Tibial artery (tissue), 4 donors: ENCODE measurements at regions of chr3 and their contacts with region 1.

Region 1: DNA sequence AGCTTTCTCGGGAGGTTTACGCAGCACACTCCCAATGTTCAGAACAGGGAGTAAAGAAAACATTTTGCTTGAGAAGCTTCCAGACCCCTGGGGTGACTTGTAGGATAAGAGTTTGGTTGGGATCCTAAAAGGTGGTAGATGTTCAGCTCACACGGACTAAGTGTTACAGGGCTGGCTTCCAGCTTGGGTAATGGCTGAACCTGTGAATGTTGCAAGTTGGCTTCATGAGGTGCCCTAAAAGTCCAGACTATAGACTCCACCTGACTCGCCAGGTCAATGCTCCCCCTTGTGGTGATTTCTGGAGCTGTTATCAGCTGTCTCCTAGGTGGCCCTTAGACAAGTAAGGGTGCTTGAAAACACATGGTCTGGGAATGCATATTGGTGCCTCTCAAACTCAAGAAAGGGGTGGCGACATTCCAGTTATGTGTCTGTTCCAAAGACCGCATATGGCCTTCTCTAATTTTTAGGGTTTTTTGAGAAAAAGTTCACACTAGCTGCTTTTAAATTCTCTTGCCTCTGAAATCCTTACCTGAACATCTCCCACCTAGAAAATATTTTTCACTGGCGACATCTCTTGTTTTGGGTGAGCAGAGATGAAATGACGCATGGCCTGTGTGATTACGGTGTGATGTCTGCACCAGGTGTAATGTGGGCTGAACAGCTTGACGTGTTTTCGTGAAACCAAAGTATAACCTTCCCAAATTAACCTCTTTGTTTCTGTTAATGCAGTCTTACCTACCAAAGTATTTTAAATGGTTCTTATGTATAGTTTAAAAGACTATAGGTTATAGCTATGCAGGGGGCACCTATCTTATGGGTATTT is 175.7 kb upstream of the KBTBD8 start:
- DNase-seq: peak in 1 of 2 donors; percentile 40
- H3K4me3 ChIP-seq: no peak overlapping the region
- H3K27ac ChIP-seq: no peak overlapping the region
- H3K4me1 ChIP-seq: peaks cover 0 to 8% (median 0%) of the 10 kb centered on the region in 4 donors
- H3K27me3 ChIP-seq: peaks cover 0 to 6% of the 10 kb centered on the region in 2 donors
- CTCF ChIP-seq: peak; percentile 63 to 66

Region 2: DNA sequence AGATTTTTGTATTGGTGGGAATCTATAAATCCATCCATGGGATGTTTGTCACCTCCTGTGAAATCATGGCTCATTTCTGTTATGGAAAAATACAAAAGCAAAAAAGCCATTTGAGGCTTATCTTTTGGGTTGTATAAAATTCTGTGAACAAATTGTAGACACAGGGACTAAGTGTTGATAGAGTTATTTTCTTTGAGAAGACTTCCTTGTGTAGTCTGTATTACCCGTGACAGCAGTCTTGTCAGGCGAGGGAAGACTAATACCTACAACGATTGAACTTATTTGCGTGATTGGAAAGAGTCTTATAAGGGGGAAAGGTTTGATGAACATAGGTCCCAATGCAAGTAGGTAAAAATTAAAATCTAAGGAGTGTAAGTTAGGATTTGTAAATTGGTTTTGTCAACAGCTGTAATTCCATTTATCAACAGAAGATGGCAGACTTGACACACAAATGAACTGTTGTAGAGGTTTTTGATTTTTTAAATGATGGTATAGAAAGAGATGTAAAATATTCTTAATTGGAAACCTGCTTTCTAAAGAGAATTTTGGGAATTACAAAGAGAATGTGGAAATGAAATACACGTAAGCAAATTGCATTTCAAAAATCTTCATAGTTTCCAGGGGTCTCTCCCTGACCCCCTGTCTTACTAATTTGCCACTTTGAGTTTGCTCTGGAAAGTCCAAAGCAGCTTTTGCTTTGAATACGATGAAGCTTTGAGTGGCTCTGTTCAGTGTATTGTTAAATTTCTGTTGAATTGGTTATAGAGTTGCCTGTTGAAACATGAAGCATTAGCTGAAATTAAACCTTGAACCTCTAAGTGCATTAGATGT is 568.4 kb before region 1 on chr3:
- intact Hi-C with region 1: loop called (anchors 10 kb)
- DNase-seq: no peak
- H3K4me3 ChIP-seq: no peak overlapping the region
- H3K27ac ChIP-seq: no peak overlapping the region
- H3K4me1 ChIP-seq: no peaks in the 10 kb centered on the region
- H3K27me3 ChIP-seq: no peaks in the 10 kb centered on the region
- CTCF ChIP-seq: peak; percentile 62 to 80

Region 3: DNA sequence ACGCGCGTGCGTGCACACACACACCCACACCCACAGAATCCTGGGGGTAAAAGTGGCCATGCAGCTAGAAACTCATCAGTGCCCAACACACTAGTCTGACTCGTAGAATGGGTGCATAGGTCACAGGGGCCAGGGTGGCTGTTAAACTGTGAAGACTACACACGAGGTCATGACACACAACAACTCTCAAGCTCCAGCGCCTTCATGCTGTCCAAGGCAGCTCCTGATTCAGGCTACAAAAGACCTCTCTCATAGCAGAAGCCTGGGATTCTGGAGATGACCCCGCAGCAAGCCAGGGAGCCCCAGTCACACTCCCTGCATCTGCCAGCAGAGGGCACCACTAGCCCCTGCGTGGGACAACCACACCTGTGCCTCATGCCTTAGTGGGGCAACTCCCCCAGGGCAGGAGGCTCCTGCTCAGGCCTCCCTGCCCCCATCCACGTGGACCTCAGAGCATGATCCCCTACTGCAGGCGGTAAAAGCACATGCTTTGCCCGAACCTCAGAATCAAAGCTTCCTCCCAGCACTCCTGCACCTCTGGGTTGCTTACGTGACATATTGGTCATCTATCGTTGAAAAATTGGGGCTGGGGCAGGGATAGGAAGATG is 414.7 kb before region 1 on chr3:
- intact Hi-C with region 1: loop called (anchors 5 kb)
- DNase-seq: peak; percentile 59 to 80
- H3K4me3 ChIP-seq: no peak overlapping the region
- H3K27ac ChIP-seq: peak overlapping the region; percentile 69 to 77
- H3K4me1 ChIP-seq: peaks cover 5 to 81% (median 61%) of the 10 kb centered on the region in 4 donors
- H3K27me3 ChIP-seq: no peaks in the 10 kb centered on the region
- CTCF ChIP-seq: peak; percentile 75 to 89